ENCODE measurements at regions of chr17 and their contacts with region 1.

Region 1: DNA sequence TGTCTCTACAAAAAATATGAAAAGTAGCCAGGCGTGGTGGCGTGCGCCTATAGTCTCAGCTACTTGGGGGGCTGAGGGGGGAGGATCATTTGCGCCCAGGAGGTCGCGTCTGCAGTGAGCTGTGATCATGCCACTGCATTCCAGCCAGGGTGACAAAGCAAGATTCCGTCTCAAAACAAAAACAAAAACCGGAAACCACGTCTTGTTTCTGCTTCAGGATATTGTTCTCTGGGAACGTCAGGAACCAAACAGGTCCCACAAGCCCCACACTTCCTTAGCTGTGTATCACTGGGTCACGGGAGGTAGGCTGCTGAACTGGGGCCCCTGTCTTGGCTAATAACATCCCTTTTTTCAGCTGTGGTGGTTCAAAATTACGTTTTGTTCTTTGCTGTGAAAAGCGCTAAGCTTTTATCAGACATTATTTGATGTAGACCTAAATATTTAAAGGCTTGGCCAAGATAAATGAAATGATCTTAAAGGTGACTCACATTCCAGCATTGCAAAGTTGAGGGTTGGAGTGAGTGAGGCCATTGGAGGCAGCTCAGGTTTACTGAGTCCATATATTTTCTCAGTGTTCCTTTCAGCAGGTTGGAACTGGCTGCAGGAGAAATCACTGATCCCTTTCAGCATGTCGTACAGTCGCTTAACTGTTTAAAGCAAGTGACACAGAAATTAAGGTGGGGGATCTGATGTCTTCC is 16.4 kb upstream of the SEC14L1 start:
- DNase-seq: peak in 1 of 2 donors; percentile 71
- ATAC-seq: peak; percentile 59 to 74 (median 67)
- H3K4me3 ChIP-seq: no peak overlapping the region
- H3K27ac ChIP-seq: peak overlapping the region; percentile 81 to 96 (median 88)
- H3K4me1 ChIP-seq: peaks cover 14 to 91% (median 78%) of the 10 kb centered on the region in 9 donors
- H3K27me3 ChIP-seq: no peaks in the 10 kb centered on the region
- CTCF ChIP-seq: no peak

Region 2: DNA sequence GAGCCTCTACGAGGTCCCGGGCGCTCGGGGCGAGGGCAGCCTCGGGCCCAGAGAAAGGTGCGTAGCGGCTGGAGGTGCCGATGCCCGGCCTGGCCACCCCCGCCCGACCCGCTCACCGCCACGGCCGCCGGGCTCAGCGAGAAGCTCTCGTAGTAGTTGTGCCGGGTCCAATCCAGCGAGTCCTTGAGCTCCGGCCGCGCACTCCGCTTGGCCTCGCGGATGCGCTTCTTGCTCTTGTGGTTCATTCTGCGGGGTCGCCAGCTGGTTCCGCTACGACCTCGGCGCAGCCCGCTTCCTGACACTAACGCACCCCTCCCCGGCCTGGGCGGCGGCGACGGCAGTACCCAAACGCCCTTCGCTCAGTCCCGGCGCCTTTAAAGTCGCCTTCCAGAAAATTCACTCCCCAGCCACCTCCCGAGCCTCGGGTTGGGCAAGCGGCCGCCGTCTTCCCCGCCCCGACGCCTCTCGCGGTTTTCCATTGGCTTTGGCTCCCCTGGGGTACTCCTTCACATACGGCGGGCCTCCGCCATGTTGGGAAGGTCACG is 398.0 kb before region 1 on chr17 and contains the start of gene JMJD6:
- intact Hi-C with region 1: no loop called
- DNase-seq: peak; percentile 96 to 97
- ATAC-seq: peak; percentile 93 to 97 (median 95)
- H3K4me3 ChIP-seq: peak within 1 kb of the TSS; percentile 72 to 100 (median 88)
- H3K27ac ChIP-seq: peak within 1 kb of the TSS; percentile 96 to 100 (median 99)
- H3K4me1 ChIP-seq: peaks cover 13 to 78% (median 64%) of the 10 kb centered on the region in 9 donors
- H3K27me3 ChIP-seq: no peaks in the 10 kb centered on the region
- CTCF ChIP-seq: no peak
- total RNA-seq, gene JMJD6: 34.6 to 79.3 (median 43.2) TPM

Region 3: GRCh38 chr17:77109764-77110359 is 14.5 kb before region 1 on chr17:
- intact Hi-C with region 1: loop called in 1 of 10 experiments (anchors 2 kb)
- DNase-seq: peak in 1 of 2 donors; percentile 57
- ATAC-seq: peak; percentile 70 to 93 (median 88)
- H3K4me3 ChIP-seq: no peak overlapping the region
- H3K27ac ChIP-seq: peak overlapping the region; percentile 81 to 91 (median 88)
- H3K4me1 ChIP-seq: peaks cover 11 to 69% (median 45%) of the 10 kb centered on the region in 9 donors
- H3K27me3 ChIP-seq: no peaks in the 10 kb centered on the region
- CTCF ChIP-seq: peak in 2 of 9 donors; percentile 23 to 28

Measured in heart right ventricle (tissue), 16 donors.